T-cell (primary cell): ENCODE measurements at regions of chr9 and their contacts with region 1.

Region 1: GRCh38 chr9:127770905-127771569 is 7.4 kb downstream of the SH2D3C start:
- DNase-seq: peak; percentile 84 to 96 (median 90)
- ATAC-seq: peak; percentile 85 to 89 (median 86)
- H3K4me3 ChIP-seq: peak overlapping the region; percentile 57 to 58
- H3K4me3 Mint-ChIP-seq: peak overlapping the region; percentile 86 to 89 (median 87)
- H3K27ac ChIP-seq: peak overlapping the region; percentile 95
- H3K27ac Mint-ChIP-seq: peak overlapping the region; percentile 95
- H3K4me1 ChIP-seq: peaks cover 51 to 92% of the 10 kb centered on the region in 2 experiments
- H3K4me1 Mint-ChIP-seq: peaks cover 72 to 78% (median 75%) of the 10 kb centered on the region in 3 donors
- H3K27me3 ChIP-seq: no peaks in the 10 kb centered on the region
- H3K27me3 Mint-ChIP-seq: no peaks in the 10 kb centered on the region

Region 2: DNA sequence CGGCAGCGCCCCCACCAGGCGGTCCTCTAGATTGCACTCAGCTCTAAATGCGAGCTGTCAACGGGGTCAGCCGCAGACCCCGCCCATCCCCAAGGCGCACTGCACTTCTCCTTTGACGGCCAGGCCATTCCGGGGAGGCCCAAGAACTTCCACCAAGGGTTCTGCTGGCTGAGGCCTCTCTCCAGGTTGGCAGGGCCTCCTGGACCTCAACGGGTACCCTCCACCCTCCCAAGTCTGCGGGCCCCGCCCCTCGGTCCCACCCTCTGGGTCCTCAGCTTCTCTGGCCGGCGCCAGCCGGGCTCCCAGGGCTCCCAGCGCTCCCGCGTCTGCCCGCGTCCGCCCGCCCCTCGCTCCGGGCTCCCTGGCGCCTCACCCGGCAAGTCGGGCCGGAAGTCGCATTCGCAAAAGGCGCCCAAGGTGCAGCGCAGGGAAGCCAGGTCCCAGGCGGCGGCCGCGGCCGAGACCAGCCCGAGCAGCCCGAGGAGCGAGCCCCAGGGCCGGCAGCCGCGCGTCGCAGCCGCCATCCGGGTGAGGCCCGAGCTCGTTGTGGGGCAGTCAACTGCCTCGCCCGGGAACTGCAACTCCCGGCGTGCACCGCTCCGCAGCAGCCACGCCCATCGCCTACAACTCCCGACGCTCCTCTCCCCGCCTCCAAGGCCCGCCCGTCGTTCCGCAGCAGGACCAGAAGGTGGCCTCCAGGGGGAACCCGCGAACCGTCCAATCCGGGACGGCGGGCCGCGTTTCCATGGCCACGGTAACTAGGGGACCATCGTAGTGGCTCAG is 36.1 kb before region 1 on chr9 and contains the start of gene TOR2A:
- CTCF ChIA-PET with region 1: interaction called, 3 to 22 read pairs
- POLR2A ChIA-PET with region 1: no interaction called
- DNase-seq: peak; percentile 96 to 100 (median 99)
- ATAC-seq: peak; percentile 90 to 93 (median 92)
- H3K4me3 ChIP-seq: peak within 1 kb of the TSS; percentile 60 to 69
- H3K4me3 Mint-ChIP-seq: peak within 1 kb of the TSS; percentile 82 to 94 (median 85)
- H3K27ac ChIP-seq: peak within 1 kb of the TSS; percentile 95
- H3K27ac Mint-ChIP-seq: peak within 1 kb of the TSS; percentile 92 to 97
- H3K4me1 ChIP-seq: peaks cover 2 to 23% of the 10 kb centered on the region in 2 experiments
- H3K4me1 Mint-ChIP-seq: peaks cover 5 to 22% (median 18%) of the 10 kb centered on the region in 3 donors
- H3K27me3 ChIP-seq: no peaks in the 10 kb centered on the region
- H3K27me3 Mint-ChIP-seq: no peaks in the 10 kb centered on the region
- total RNA-seq, gene TOR2A: 7.7 to 18.4 (median 15.5) TPM

Region 3: GRCh38 chr9:127785023-127785932 is 14.2 kb after region 1 on chr9:
- CTCF ChIA-PET with region 1: interaction called, 6 to 31 read pairs
- POLR2A ChIA-PET with region 1: interaction called in 1 of 2 experiments, 4 read pairs
- DNase-seq: peak; percentile 72 to 94 (median 85)
- ATAC-seq: peak; percentile 59 to 67 (median 60)
- H3K4me3 ChIP-seq: peak overlapping the region; percentile 25 to 55
- H3K4me3 Mint-ChIP-seq: peak overlapping the region; percentile 68 to 91 (median 88)
- H3K27ac ChIP-seq: peak overlapping the region; percentile 94
- H3K27ac Mint-ChIP-seq: peak overlapping the region; percentile 96 to 97
- H3K4me1 ChIP-seq: peaks cover 25 to 84% of the 10 kb centered on the region in 2 experiments
- H3K4me1 Mint-ChIP-seq: peaks cover 67 to 74% (median 70%) of the 10 kb centered on the region in 3 donors
- H3K27me3 ChIP-seq: no peaks in the 10 kb centered on the region
- H3K27me3 Mint-ChIP-seq: no peaks in the 10 kb centered on the region

Region 4: DNA sequence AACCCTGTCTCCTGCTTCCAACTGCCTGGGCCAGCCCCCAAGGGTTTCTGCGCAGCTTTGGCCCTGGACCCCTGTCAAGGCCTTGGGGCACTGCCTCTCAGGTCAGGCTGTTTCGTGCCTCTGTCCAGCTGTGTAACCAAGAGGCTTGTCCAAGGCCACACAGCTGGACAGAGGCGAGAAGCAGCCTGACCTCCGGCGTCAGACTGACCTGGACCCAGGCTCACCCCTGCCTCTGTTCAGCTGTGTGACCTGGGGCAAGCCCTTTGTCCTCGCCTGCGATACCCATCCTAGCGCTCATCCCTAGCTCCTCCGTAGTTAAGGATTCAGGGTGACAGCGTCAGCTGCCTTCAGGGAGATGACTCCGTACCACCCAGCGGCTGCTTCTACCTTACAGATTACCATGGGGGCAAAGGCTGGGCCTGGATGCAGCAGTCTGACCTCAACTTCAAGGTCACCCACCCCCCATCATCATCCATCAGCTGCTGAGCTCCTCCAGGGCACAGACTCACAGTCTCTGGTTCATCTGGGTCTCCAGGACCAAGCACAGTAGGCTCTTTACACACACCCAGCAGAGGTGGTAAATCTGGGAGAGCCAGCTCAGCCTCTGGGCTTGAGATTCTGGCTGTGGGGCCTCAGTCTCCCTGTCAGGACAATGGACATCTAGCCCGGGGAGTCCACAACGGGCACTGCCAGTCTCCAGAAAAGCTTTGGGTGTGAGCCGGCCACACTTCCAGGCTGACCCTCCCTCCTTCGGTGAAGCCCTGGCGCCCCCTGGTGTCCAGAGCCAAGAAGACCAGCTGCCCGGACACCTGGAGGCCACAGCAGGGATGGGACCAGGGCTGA is 98.5 kb after region 1 on chr9:
- CTCF ChIA-PET with region 1: interaction called in 1 of 2 experiments, 4 read pairs
- POLR2A ChIA-PET with region 1: interaction called in 1 of 2 experiments, 11 read pairs
- DNase-seq: peak in 34 of 35 experiments; percentile 39 to 82 (median 60)
- ATAC-seq: peak; percentile 61 to 74 (median 70)
- H3K4me3 ChIP-seq: no peak overlapping the region
- H3K4me3 Mint-ChIP-seq: no peak overlapping the region
- H3K27ac ChIP-seq: no peak overlapping the region
- H3K27ac Mint-ChIP-seq: no peak overlapping the region
- H3K4me1 ChIP-seq: peaks cover 3 to 24% of the 10 kb centered on the region in 2 experiments
- H3K4me1 Mint-ChIP-seq: peaks cover 14 to 18% (median 18%) of the 10 kb centered on the region in 3 donors
- H3K27me3 ChIP-seq: no peaks in the 10 kb centered on the region
- H3K27me3 Mint-ChIP-seq: no peaks in the 10 kb centered on the region